ENCODE measurements at regions of chr2 and their contacts with region 1.

Region 1: GRCh38 chr2:194166818-194167217 is 1490.2 kb upstream of the SLC39A10 start:
- DNase-seq: no peak
- ATAC-seq: no peak
- H3K4me3 ChIP-seq: no peak overlapping the region
- H3K27ac ChIP-seq: no peak overlapping the region
- H3K4me1 ChIP-seq: no peaks in the 10 kb centered on the region
- H3K27me3 ChIP-seq: no peaks in the 10 kb centered on the region
- CTCF ChIP-seq: peak in 6 of 9 donors; percentile 16 to 46 (median 32)

Region 2: GRCh38 chr2:194203898-194204297 is 37.1 kb after region 1 on chr2:
- intact Hi-C with region 1: no loop called
- DNase-seq: no peak
- ATAC-seq: no peak
- H3K4me3 ChIP-seq: no peak overlapping the region
- H3K27ac ChIP-seq: no peak overlapping the region
- H3K4me1 ChIP-seq: no peaks in the 10 kb centered on the region
- H3K27me3 ChIP-seq: no peaks in the 10 kb centered on the region
- CTCF ChIP-seq: no peak

Region 3: GRCh38 chr2:195318440-195319111 is 1151.8 kb after region 1 on chr2:
- intact Hi-C with region 1: loop called in 1 of 10 experiments (anchors 10 kb)
- DNase-seq: peak in 1 of 2 donors; percentile 6
- ATAC-seq: no peak
- H3K4me3 ChIP-seq: no peak overlapping the region
- H3K27ac ChIP-seq: no peak overlapping the region
- H3K4me1 ChIP-seq: peaks cover 0 to 7% (median 0%) of the 10 kb centered on the region in 9 donors
- H3K27me3 ChIP-seq: no peaks in the 10 kb centered on the region
- CTCF ChIP-seq: peak in 8 of 9 donors; percentile 8 to 69 (median 58)

Measured in heart right ventricle (tissue), 16 donors.